CD8-positive, alpha-beta T cell (primary cell): ENCODE measurements at regions of chr5 and their contacts with region 1.

Region 1: DNA sequence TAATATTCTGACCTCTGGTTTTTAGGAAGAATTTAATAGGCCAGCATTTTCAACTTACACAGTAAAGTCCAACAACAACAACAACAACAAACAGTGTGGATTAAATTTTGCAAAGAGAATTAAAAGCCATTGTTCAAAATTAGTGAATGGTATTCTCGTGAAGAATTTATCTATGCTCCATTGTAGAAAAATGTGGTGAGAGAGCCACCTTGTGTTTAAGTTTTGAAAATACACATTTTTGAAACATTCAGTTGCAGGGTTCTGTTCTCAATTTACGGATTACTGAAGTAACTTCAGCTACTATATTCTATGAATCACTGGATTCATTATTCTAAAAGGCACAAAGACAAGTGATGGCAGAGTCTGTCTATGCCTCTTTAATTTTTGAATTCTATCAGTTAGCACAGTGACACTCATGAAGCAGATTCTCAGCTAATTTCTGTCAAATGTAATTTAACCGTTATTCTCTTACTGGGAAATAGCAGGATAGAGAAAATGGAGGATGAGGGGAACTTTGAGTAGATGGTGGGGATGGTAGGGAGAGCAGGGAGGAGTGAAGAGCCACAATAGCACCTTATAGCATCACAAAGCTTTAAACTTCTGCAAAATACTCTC is 11.0 kb downstream of the CCDC152 start:
- DNase-seq: peak in 2 of 9 experiments; percentile 36 to 41
- ATAC-seq: no peak
- H3K4me3 ChIP-seq: no peak overlapping the region
- H3K4me3 Mint-ChIP-seq: no peak overlapping the region
- H3K27ac ChIP-seq: no peak overlapping the region
- H3K27ac Mint-ChIP-seq: no peak overlapping the region
- H3K4me1 ChIP-seq: no peaks in the 10 kb centered on the region
- H3K4me1 Mint-ChIP-seq: no peaks in the 10 kb centered on the region
- H3K27me3 ChIP-seq: no peaks in the 10 kb centered on the region
- H3K27me3 Mint-ChIP-seq: peaks cover 8% of the 10 kb centered on the region
- CTCF ChIP-seq: peak; percentile 60

Region 2: DNA sequence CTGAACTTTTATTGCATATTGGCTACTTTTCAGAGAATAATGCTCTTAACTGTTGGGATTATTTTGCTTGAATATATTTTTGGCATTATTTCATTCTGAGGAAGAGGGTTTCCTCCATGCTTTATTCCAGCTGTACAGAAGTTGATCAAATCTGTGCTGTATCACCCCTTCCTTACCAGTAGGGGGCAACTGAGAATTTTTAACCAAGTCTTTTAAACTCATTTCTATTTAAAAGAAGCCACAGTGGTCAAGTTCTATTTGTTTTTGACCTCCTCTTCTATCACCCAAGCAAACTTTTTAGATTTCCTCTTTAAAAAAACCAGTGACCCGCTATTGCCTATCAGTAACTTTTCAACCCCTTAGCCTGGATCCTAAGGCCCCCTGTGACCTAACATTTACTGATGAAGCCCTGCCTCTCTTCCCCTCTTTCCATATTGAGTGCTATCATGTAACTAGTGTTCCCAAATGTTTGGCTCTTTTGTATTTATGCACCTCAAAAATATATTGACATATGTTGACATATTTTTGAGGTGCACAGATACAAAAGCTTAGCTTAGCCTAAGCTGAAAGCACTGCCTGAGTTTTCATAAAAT is 761.9 kb before region 1 on chr5:
- CTCF ChIA-PET with region 1: no interaction called
- POLR2A ChIA-PET with region 1: no interaction called
- intact Hi-C with region 1: loop called in 1 of 2 experiments (anchors 5 kb)
- DNase-seq: peak in 2 of 9 experiments; percentile 7 to 27
- ATAC-seq: no peak
- H3K4me3 ChIP-seq: no peak overlapping the region
- H3K4me3 Mint-ChIP-seq: no peak overlapping the region
- H3K27ac ChIP-seq: no peak overlapping the region
- H3K27ac Mint-ChIP-seq: no peak overlapping the region
- H3K4me1 ChIP-seq: no peaks in the 10 kb centered on the region
- H3K4me1 Mint-ChIP-seq: no peaks in the 10 kb centered on the region
- H3K27me3 ChIP-seq: no peaks in the 10 kb centered on the region
- H3K27me3 Mint-ChIP-seq: peaks cover 16% of the 10 kb centered on the region
- CTCF ChIP-seq: peak; percentile 84

Region 3: GRCh38 chr5:42396111-42396510 is 371.5 kb before region 1 on chr5:
- CTCF ChIA-PET with region 1: no interaction called
- POLR2A ChIA-PET with region 1: no interaction called
- intact Hi-C with region 1: no loop called
- DNase-seq: no peak
- ATAC-seq: no peak
- H3K4me3 ChIP-seq: no peak overlapping the region
- H3K4me3 Mint-ChIP-seq: no peak overlapping the region
- H3K27ac ChIP-seq: no peak overlapping the region
- H3K27ac Mint-ChIP-seq: no peak overlapping the region
- H3K4me1 ChIP-seq: no peaks in the 10 kb centered on the region
- H3K4me1 Mint-ChIP-seq: no peaks in the 10 kb centered on the region
- H3K27me3 ChIP-seq: no peaks in the 10 kb centered on the region
- H3K27me3 Mint-ChIP-seq: peaks cover 2% of the 10 kb centered on the region
- CTCF ChIP-seq: no peak

Region 4: DNA sequence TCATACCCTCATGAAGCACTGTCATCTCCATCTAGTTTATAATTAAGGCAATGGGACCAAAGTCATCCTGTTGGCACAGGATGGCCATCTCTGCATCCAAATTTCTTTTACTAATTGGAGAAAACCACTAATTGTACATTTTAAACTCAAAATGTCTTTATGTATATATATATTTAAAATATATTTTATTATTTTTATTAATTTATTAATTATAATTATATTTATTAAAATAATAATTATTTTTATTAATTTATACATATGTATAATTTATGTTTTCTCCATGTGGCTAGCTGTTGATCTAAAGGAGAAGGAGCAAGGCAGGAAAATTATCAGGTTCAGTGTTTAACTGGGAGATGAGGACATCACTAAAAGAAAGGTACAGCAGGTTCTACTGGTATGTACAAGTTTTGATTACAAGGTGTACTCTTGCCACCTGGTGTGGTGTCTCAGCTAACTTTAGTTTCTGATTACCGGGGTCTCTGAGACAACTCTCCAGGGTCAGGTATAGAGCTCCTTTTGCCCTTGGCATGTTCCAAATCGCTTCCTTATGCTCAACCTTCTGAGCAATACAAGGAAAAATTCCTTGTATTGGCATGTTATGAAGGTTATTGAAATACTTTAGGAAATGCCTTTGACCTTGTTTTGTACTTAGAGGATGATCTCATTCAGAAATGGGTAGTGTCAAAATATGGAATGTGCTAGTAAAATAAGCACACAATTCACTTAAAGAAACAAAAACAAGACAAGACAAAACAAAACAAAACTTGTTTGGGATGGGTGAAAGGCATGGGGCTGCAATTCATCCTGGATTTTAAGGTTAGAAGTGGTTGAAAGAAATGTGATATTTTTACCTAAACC is 264.8 kb before region 1 on chr5:
- CTCF ChIA-PET with region 1: no interaction called
- POLR2A ChIA-PET with region 1: no interaction called
- intact Hi-C with region 1: no loop called
- DNase-seq: no peak
- ATAC-seq: no peak
- H3K4me3 ChIP-seq: no peak overlapping the region
- H3K4me3 Mint-ChIP-seq: no peak overlapping the region
- H3K27ac ChIP-seq: no peak overlapping the region
- H3K27ac Mint-ChIP-seq: no peak overlapping the region
- H3K4me1 ChIP-seq: no peaks in the 10 kb centered on the region
- H3K4me1 Mint-ChIP-seq: no peaks in the 10 kb centered on the region
- H3K27me3 ChIP-seq: no peaks in the 10 kb centered on the region
- H3K27me3 Mint-ChIP-seq: no peaks in the 10 kb centered on the region
- CTCF ChIP-seq: no peak

Region 5: DNA sequence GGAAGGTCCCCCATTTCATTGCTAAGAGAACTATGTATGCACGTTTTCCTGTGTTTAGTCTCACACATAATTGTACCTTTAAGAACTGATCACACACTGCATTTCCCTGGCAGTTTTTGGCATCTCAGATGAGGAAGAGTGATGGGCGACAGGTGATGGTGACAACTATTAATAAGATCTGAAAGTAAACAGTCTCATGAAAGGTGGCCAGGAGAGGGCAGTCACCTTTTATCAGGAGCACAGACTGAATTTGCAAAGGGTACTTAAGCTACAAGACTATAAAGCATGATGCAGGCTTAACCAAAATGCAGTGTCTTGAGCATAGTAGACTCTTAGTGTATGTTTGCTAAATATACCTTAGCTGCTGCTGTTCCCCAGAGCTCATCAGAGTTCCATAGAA is 252.8 kb before region 1 on chr5:
- CTCF ChIA-PET with region 1: interaction called, 6 read pairs
- POLR2A ChIA-PET with region 1: no interaction called
- intact Hi-C with region 1: loop called (anchors 2 to 5 kb)
- DNase-seq: peak in 2 of 9 experiments; percentile 16 to 28
- ATAC-seq: no peak
- H3K4me3 ChIP-seq: no peak overlapping the region
- H3K4me3 Mint-ChIP-seq: no peak overlapping the region
- H3K27ac ChIP-seq: no peak overlapping the region
- H3K27ac Mint-ChIP-seq: no peak overlapping the region
- H3K4me1 ChIP-seq: no peaks in the 10 kb centered on the region
- H3K4me1 Mint-ChIP-seq: no peaks in the 10 kb centered on the region
- H3K27me3 ChIP-seq: no peaks in the 10 kb centered on the region
- H3K27me3 Mint-ChIP-seq: no peaks in the 10 kb centered on the region
- CTCF ChIP-seq: no peak

Region 6: DNA sequence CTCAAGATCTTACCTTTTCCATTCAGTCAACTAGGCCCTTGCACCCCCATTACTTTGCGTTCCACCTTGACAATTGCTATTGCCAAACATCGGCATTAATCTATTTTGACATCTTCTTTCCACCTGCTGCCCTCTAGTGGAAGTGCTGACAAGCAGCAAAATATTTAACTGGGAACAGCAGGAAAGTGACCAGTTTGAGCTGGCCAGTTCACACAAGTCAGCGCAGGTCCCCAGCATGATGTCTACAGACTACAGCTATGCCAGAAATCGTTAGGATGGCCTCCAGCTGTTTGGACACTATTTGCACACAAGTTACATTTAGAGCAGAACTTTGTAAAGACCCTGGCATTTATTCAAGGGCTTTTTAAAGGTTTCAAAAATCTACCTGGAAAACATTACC is 184.3 kb before region 1 on chr5:
- CTCF ChIA-PET with region 1: interaction called, 3 read pairs
- POLR2A ChIA-PET with region 1: no interaction called
- intact Hi-C with region 1: loop called (anchors 5 to 10 kb)
- DNase-seq: peak in 5 of 9 experiments; percentile 5 to 51 (median 22)
- ATAC-seq: no peak
- H3K4me3 ChIP-seq: no peak overlapping the region
- H3K4me3 Mint-ChIP-seq: no peak overlapping the region
- H3K27ac ChIP-seq: no peak overlapping the region
- H3K27ac Mint-ChIP-seq: no peak overlapping the region
- H3K4me1 ChIP-seq: no peaks in the 10 kb centered on the region
- H3K4me1 Mint-ChIP-seq: no peaks in the 10 kb centered on the region
- H3K27me3 ChIP-seq: peaks cover 0 to 5% of the 10 kb centered on the region in 2 experiments
- H3K27me3 Mint-ChIP-seq: peaks cover 12% of the 10 kb centered on the region
- CTCF ChIP-seq: peak; percentile 54

Region 7: DNA sequence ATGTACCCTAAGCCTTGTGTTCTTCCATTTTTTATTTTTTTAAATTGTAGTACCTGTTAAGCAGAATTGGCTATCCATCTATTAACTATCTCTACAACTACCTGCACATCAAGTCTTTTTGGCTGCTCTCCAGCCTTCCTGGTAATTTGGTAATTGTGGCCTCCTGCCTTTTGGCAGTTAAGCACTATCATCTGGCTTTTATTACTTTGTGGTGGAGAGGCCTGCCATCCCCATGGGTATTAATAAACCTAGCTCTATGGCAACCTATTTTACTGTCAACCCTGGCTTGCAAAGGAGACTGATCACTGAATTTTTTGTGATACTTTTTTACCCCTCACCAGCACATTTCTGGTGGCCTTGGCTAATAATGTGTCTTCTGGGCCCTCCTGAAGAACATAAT is 23.6 kb after region 1 on chr5:
- CTCF ChIA-PET with region 1: no interaction called
- POLR2A ChIA-PET with region 1: no interaction called
- intact Hi-C with region 1: no loop called
- DNase-seq: no peak
- ATAC-seq: no peak
- H3K4me3 ChIP-seq: no peak overlapping the region
- H3K4me3 Mint-ChIP-seq: no peak overlapping the region
- H3K27ac ChIP-seq: no peak overlapping the region
- H3K27ac Mint-ChIP-seq: no peak overlapping the region
- H3K4me1 ChIP-seq: no peaks in the 10 kb centered on the region
- H3K4me1 Mint-ChIP-seq: no peaks in the 10 kb centered on the region
- H3K27me3 ChIP-seq: no peaks in the 10 kb centered on the region
- H3K27me3 Mint-ChIP-seq: no peaks in the 10 kb centered on the region
- CTCF ChIP-seq: no peak